ENCODE measurements at regions of chr17 and their contacts with region 1.

Region 1: GRCh38 chr17:40531051-40531991 is 29.9 kb upstream of the TNS4 start:
- DNase-seq: peak; percentile 71
- ATAC-seq: peak; percentile 74
- H3K4me3 ChIP-seq: no peak overlapping the region
- H3K27ac ChIP-seq: peak overlapping the region; percentile 60; the same call in 1 of the 2 replicates
- H3K4me1 ChIP-seq: peaks cover 38% of the 10 kb centered on the region
- H3K27me3 ChIP-seq: no peaks in the 10 kb centered on the region
- CTCF ChIP-seq: no peak
- EP300 ChIP-seq: peak; percentile 6 to 14; a peak in 1 of 4 replicates
- POLR2A ChIP-seq: no peak
- RAD21 ChIP-seq: no peak

Region 2: DNA sequence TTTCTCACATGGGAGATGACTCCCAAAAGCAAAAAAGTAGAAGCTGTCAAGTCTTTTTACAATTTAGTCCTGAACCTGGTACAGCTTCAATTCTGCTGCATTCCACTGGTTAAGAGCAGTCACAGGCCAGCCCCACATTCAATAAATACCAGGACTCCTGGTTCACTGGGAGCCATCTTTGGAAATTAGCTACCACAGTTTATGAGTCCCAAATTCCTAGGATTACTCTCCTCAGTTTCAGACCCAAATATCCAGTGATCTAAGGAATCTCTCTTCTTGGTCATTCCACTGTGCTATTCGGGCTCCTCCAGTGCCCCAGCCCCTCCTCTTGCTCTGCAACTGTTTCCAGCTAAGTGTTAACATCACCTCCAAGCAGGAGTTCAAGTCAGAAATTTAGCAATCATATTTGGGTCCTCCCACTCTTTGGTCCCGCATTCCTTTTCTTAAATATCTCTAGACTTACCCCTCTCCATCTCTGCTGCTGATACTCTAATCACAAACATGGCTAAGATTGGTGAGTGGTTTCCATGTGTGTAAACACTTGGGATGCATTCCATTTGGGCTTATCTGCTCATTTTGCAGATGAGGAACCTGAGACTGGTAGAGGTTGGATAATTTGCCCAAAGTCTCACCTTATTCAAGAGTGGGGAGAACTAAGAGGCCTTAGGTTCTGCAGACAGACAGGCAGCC is 321.8 kb before region 1 on chr17:
- CTCF ChIA-PET with region 1: no interaction called
- POLR2A ChIA-PET with region 1: no interaction called
- RAD21 ChIA-PET with region 1: no interaction called
- SMC1A ChIA-PET with region 1: no interaction called
- in situ Hi-C with region 1: no loop called
- intact Hi-C with region 1: no loop called
- DNase-seq: no peak
- ATAC-seq: no peak
- H3K4me3 ChIP-seq: no peak overlapping the region
- H3K27ac ChIP-seq: no peak overlapping the region
- H3K4me1 ChIP-seq: no peaks in the 10 kb centered on the region
- H3K27me3 ChIP-seq: no peaks in the 10 kb centered on the region
- CTCF ChIP-seq: no peak
- EP300 ChIP-seq: no peak
- POLR2A ChIP-seq: no peak
- RAD21 ChIP-seq: no peak

Region 3: DNA sequence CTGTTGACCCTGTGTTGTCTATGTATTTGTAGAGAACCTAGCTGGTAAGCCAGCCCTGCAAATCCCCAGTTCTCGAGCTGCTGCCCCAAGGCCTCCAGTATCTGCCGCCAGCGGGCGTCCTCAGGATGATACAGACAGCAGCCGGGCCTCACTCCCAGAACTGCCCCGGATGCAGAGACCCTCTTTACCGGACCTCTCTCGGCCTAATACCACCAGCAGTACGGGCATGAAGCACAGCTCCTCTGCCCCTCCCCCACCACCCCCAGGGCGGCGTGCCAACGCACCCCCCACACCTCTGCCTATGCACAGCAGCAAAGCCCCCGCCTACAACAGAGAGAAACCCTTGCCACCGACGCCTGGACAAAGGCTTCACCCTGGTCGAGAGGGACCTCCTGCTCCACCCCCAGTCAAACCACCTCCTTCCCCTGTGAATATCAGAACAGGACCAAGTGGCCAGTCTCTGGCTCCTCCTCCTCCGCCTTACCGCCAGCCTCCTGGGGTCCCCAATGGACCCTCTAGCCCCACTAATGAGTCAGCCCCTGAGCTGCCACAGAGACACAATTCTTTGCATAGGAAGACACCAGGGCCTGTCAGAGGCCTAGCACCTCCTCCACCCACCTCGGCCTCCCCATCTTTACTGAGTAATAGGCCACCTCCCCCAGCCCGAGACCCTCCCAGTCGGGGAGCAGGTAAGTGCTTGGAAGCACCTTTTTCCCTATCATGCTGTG is 266.7 kb before region 1 on chr17:
- CTCF ChIA-PET with region 1: no interaction called
- POLR2A ChIA-PET with region 1: no interaction called
- RAD21 ChIA-PET with region 1: no interaction called
- SMC1A ChIA-PET with region 1: no interaction called
- in situ Hi-C with region 1: no loop called
- intact Hi-C with region 1: no loop called
- DNase-seq: no peak
- ATAC-seq: no peak
- H3K4me3 ChIP-seq: no peak overlapping the region
- H3K27ac ChIP-seq: no peak overlapping the region
- H3K4me1 ChIP-seq: no peaks in the 10 kb centered on the region
- H3K27me3 ChIP-seq: no peaks in the 10 kb centered on the region
- CTCF ChIP-seq: no peak
- EP300 ChIP-seq: no peak
- POLR2A ChIP-seq: no peak
- RAD21 ChIP-seq: no peak

Region 4: DNA sequence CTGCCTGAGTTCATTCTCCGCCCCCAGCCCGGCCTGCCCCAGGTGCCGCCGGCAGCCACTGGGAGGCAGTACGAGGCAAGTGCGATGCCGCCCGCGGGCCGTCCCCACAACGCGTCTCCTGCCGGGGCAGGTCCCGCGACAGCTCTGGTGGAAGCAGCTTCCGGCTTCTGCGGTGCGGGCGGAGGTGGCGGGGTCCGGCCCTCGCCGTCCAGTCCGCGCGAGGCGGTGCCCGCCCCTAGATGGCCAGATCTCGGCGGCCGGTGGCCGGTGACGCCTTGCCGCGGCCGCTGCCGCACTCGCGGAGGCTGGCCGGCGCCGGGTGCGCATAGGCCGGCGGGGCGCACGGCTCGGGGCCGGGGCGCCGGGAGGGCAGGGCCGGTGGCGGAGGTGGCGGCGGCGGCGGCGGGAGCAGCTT is 168.6 kb before region 1 on chr17:
- CTCF ChIA-PET with region 1: interaction called, 75 read pairs
- POLR2A ChIA-PET with region 1: interaction called, 5 read pairs
- RAD21 ChIA-PET with region 1: interaction called, 29 read pairs
- SMC1A ChIA-PET with region 1: interaction called, 38 read pairs
- in situ Hi-C with region 1: loop called (anchors 5 kb)
- intact Hi-C with region 1: loop called (anchors 1 kb)
- DNase-seq: no peak
- ATAC-seq: peak; percentile 95
- H3K4me3 ChIP-seq: peak overlapping the region; percentile 65; the same call in 1 of the 2 replicates
- H3K27ac ChIP-seq: no peak overlapping the region
- H3K4me1 ChIP-seq: no peaks in the 10 kb centered on the region; the same call in none of the 2 replicates
- H3K27me3 ChIP-seq: peaks cover 0 to 2% of the 10 kb centered on the region in 2 experiments; a peak in 1 of 4 replicates
- CTCF ChIP-seq: peak; percentile 85
- EP300 ChIP-seq: no peak
- POLR2A ChIP-seq: peak; percentile 78
- RAD21 ChIP-seq: peak; percentile 64

Region 5: GRCh38 chr17:40417609-40418427 is 113.5 kb before region 1 on chr17 and contains the start of gene TOP2A:
- CTCF ChIA-PET with region 1: interaction called, 86 read pairs
- POLR2A ChIA-PET with region 1: interaction called, 21 read pairs
- RAD21 ChIA-PET with region 1: interaction called, 88 read pairs
- SMC1A ChIA-PET with region 1: interaction called, 106 read pairs
- in situ Hi-C with region 1: no loop called
- intact Hi-C with region 1: no loop called
- DNase-seq: peak; percentile 99
- ATAC-seq: peak; percentile 97
- H3K4me3 ChIP-seq: peak within 1 kb of the TSS; percentile 94
- H3K27ac ChIP-seq: peak within 1 kb of the TSS; percentile 62
- H3K4me1 ChIP-seq: no peaks in the 10 kb centered on the region; the same call in 1 of the 2 replicates
- H3K27me3 ChIP-seq: no peaks in the 10 kb centered on the region; a peak in 1 of 4 replicates
- CTCF ChIP-seq: no peak
- EP300 ChIP-seq: no peak
- POLR2A ChIP-seq: peak; percentile 91
- RAD21 ChIP-seq: no peak
- polyA plus RNA-seq, gene TOP2A: 149 to 236 TPM

Region 6: GRCh38 chr17:40450175-40450574 is 81.1 kb before region 1 on chr17:
- CTCF ChIA-PET with region 1: interaction called, 289 read pairs
- POLR2A ChIA-PET with region 1: interaction called, 4 read pairs
- RAD21 ChIA-PET with region 1: interaction called, 175 read pairs
- SMC1A ChIA-PET with region 1: interaction called, 27 read pairs
- in situ Hi-C with region 1: loop called (anchors 25 kb)
- intact Hi-C with region 1: no loop called
- DNase-seq: no peak
- ATAC-seq: peak; percentile 69
- H3K4me3 ChIP-seq: no peak overlapping the region
- H3K27ac ChIP-seq: no peak overlapping the region
- H3K4me1 ChIP-seq: peaks cover 6% of the 10 kb centered on the region
- H3K27me3 ChIP-seq: 0 out of 4 replicates have a peak, but pooled peaks cover 0 to 7% of the 10 kb centered on the region in 2 experiments
- CTCF ChIP-seq: peak; percentile 55 to 78 (median 56); a peak in 5 of 6 replicates
- EP300 ChIP-seq: no peak
- POLR2A ChIP-seq: no peak
- RAD21 ChIP-seq: peak; percentile 21; the same call in 1 of the 2 replicates

Region 7: GRCh38 chr17:40490289-40490853 is 41.0 kb before region 1 on chr17:
- CTCF ChIA-PET with region 1: interaction called, 7 read pairs
- POLR2A ChIA-PET with region 1: interaction called, 7 read pairs
- RAD21 ChIA-PET with region 1: interaction called, 13 read pairs
- SMC1A ChIA-PET with region 1: interaction called, 6 read pairs
- in situ Hi-C with region 1: no loop called
- intact Hi-C with region 1: no loop called
- DNase-seq: no peak
- ATAC-seq: peak; percentile 57
- H3K4me3 ChIP-seq: no peak overlapping the region
- H3K27ac ChIP-seq: no peak overlapping the region
- H3K4me1 ChIP-seq: peaks cover 7% of the 10 kb centered on the region
- H3K27me3 ChIP-seq: peaks cover 0 to 2% of the 10 kb centered on the region in 2 experiments; a peak in 2 of 4 replicates
- CTCF ChIP-seq: no peak
- EP300 ChIP-seq: no peak
- POLR2A ChIP-seq: no peak
- RAD21 ChIP-seq: no peak

Region 8: GRCh38 chr17:40551879-40552768 is 20.8 kb after region 1 on chr17:
- CTCF ChIA-PET with region 1: interaction called, 318 read pairs
- POLR2A ChIA-PET with region 1: interaction called, 20 read pairs
- RAD21 ChIA-PET with region 1: interaction called, 514 read pairs
- SMC1A ChIA-PET with region 1: interaction called, 430 read pairs
- in situ Hi-C with region 1: no loop called
- intact Hi-C with region 1: no loop called
- DNase-seq: no peak
- ATAC-seq: peak; percentile 5
- H3K4me3 ChIP-seq: no peak overlapping the region
- H3K27ac ChIP-seq: no peak overlapping the region
- H3K4me1 ChIP-seq: peaks cover 45% of the 10 kb centered on the region
- H3K27me3 ChIP-seq: no peaks in the 10 kb centered on the region
- CTCF ChIP-seq: no peak
- EP300 ChIP-seq: no peak
- POLR2A ChIP-seq: peak; percentile 82
- RAD21 ChIP-seq: no peak

Region 9: GRCh38 chr17:40632216-40632615 is 100.9 kb after region 1 on chr17:
- CTCF ChIA-PET with region 1: no interaction called
- POLR2A ChIA-PET with region 1: no interaction called
- RAD21 ChIA-PET with region 1: no interaction called
- SMC1A ChIA-PET with region 1: no interaction called
- in situ Hi-C with region 1: no loop called
- intact Hi-C with region 1: no loop called
- DNase-seq: no peak
- ATAC-seq: no peak
- H3K4me3 ChIP-seq: no peak overlapping the region
- H3K27ac ChIP-seq: no peak overlapping the region
- H3K4me1 ChIP-seq: no peaks in the 10 kb centered on the region
- H3K27me3 ChIP-seq: no peaks in the 10 kb centered on the region
- CTCF ChIP-seq: no peak
- EP300 ChIP-seq: no peak
- POLR2A ChIP-seq: no peak
- RAD21 ChIP-seq: no peak

Region 10: GRCh38 chr17:40664582-40665333 is 133.4 kb after region 1 on chr17 and contains the start of gene KRT222:
- CTCF ChIA-PET with region 1: no interaction called
- POLR2A ChIA-PET with region 1: no interaction called
- RAD21 ChIA-PET with region 1: no interaction called
- SMC1A ChIA-PET with region 1: no interaction called
- in situ Hi-C with region 1: no loop called
- intact Hi-C with region 1: no loop called
- DNase-seq: no peak
- ATAC-seq: peak; percentile 62
- H3K4me3 ChIP-seq: no peak within 1 kb of the TSS
- H3K27ac ChIP-seq: no peak within 1 kb of the TSS
- H3K4me1 ChIP-seq: no peaks in the 10 kb centered on the region
- H3K27me3 ChIP-seq: peaks cover 2 to 24% of the 10 kb centered on the region in 2 experiments; a peak in 2 of 4 replicates
- CTCF ChIP-seq: no peak
- EP300 ChIP-seq: no peak
- POLR2A ChIP-seq: no peak
- RAD21 ChIP-seq: no peak
- polyA plus RNA-seq, gene KRT222: 0.74 to 0.95 TPM